ENCODE measurements at regions of chr17 and their contacts with region 1.

Region 1: GRCh38 chr17:75069783-75070182 is 18.0 kb upstream of the SLC16A5 start:
- DNase-seq: no peak
- H3K4me3 ChIP-seq: no peak overlapping the region
- H3K27ac ChIP-seq: no peak overlapping the region
- H3K4me1 ChIP-seq: peaks cover 3% of the 10 kb centered on the region
- H3K27me3 ChIP-seq: no peaks in the 10 kb centered on the region
- CTCF ChIP-seq: peak; percentile 34 to 63

Region 2: DNA sequence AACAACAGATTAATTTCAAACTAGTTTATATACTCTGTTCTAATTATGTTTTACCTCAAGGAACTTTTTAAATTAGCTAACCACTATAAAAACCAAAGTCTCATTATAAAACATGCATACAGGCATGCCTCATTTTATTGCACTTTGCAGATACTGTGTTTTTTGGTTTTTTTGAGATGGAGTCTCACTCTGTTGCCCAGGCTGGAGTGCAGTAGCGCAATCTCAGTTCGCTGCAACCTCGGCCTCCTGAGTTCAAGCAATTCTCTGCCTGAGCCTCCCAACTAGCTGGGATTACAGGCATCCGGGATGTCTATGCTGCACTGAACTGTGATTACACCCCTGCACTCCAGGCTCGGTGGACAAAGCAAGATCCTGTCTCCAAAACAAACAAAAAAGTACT is 93.3 kb after region 1 on chr17:
- CTCF ChIA-PET with region 1: interaction called, 12 read pairs
- dilution Hi-C with region 1: no loop called
- in situ Hi-C with region 1: no loop called
- intact Hi-C with region 1: no loop called
- DNase-seq: no peak
- H3K4me3 ChIP-seq: no peak overlapping the region
- H3K27ac ChIP-seq: no peak overlapping the region
- H3K4me1 ChIP-seq: peaks cover 10% of the 10 kb centered on the region
- H3K27me3 ChIP-seq: no peaks in the 10 kb centered on the region
- CTCF ChIP-seq: no peak

Region 3: GRCh38 chr17:75173526-75173925 is 103.7 kb after region 1 on chr17:
- CTCF ChIA-PET with region 1: interaction called, 15 read pairs
- dilution Hi-C with region 1: no loop called
- in situ Hi-C with region 1: no loop called
- intact Hi-C with region 1: loop called (anchors 2 kb)
- DNase-seq: no peak
- H3K4me3 ChIP-seq: no peak overlapping the region
- H3K27ac ChIP-seq: no peak overlapping the region
- H3K4me1 ChIP-seq: no peaks in the 10 kb centered on the region
- H3K27me3 ChIP-seq: no peaks in the 10 kb centered on the region
- CTCF ChIP-seq: no peak